ENCODE measurements at regions of chr4 and their contacts with region 1.

Region 1: DNA sequence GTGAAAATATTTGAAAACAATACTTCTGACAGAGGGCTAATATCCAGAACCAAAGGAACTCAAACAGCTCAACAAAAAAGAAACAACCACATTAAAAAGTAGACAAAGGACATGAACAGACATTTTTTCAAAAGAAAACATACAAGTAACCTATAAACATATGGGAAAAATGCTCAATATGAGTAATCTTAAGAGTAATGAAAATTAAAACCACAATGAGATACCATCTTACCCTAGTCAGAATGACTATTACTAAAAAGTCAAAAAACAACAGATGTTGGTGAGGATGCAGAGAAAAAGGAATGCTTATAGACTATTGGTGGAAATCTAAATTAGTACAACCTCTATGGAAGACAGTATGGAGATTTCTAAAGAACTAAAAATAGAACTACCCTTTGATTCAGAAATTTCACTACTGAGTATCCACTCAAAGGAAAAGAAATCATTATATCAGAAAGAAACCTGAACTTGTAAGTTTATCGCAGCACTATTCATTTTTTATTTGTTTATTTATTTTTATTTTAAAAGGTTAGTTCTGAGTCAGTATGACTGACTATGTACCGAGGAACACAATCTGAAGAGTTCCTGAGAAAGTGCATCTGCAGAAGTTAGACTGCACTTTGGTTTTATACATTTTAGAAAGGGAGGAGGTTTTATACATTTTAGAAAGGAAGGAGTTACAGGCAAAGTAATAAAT is 231.3 kb downstream of the INPP4B start:
- DNase-seq: no peak
- ATAC-seq: no peak
- H3K4me3 ChIP-seq: no peak overlapping the region
- H3K27ac ChIP-seq: no peak overlapping the region
- H3K4me1 ChIP-seq: peaks cover 0 to 10% (median 0%) of the 10 kb centered on the region in 12 donors
- H3K27me3 ChIP-seq: no peaks in the 10 kb centered on the region
- CTCF ChIP-seq: no peak
- POLR2A ChIP-seq: no peak

Region 2: GRCh38 chr4:142631836-142632235 is 17.1 kb after region 1 on chr4:
- intact Hi-C with region 1: loop called in 1 of 10 experiments (anchors 1 kb)
- DNase-seq: no peak
- ATAC-seq: no peak
- H3K4me3 ChIP-seq: no peak overlapping the region
- H3K27ac ChIP-seq: no peak overlapping the region
- H3K4me1 ChIP-seq: no peaks in the 10 kb centered on the region
- H3K27me3 ChIP-seq: no peaks in the 10 kb centered on the region
- CTCF ChIP-seq: no peak
- POLR2A ChIP-seq: no peak